ENCODE measurements at regions of chr2 and their contacts with region 1.

Region 1: GRCh38 chr2:170005484-170006101 is 172.4 kb upstream of the MYO3B start:
- DNase-seq: no peak
- H3K4me3 ChIP-seq: no peak overlapping the region
- H3K27ac ChIP-seq: no peak overlapping the region
- H3K4me1 ChIP-seq: no peaks in the 10 kb centered on the region
- H3K27me3 ChIP-seq: no peaks in the 10 kb centered on the region
- CTCF ChIP-seq: no peak
- EP300 ChIP-seq: no peak
- POLR2A ChIP-seq: no peak

Region 2: GRCh38 chr2:169961911-169962310 is 43.7 kb before region 1 on chr2:
- in situ Hi-C with region 1: no loop called
- intact Hi-C with region 1: loop called (anchors 1 kb)
- DNase-seq: no peak
- H3K4me3 ChIP-seq: no peak overlapping the region
- H3K27ac ChIP-seq: no peak overlapping the region
- H3K4me1 ChIP-seq: peaks cover 0 to 8% (median 4%) of the 10 kb centered on the region in 4 donors
- H3K27me3 ChIP-seq: no peaks in the 10 kb centered on the region
- CTCF ChIP-seq: no peak
- EP300 ChIP-seq: no peak
- POLR2A ChIP-seq: no peak

Region 3: DNA sequence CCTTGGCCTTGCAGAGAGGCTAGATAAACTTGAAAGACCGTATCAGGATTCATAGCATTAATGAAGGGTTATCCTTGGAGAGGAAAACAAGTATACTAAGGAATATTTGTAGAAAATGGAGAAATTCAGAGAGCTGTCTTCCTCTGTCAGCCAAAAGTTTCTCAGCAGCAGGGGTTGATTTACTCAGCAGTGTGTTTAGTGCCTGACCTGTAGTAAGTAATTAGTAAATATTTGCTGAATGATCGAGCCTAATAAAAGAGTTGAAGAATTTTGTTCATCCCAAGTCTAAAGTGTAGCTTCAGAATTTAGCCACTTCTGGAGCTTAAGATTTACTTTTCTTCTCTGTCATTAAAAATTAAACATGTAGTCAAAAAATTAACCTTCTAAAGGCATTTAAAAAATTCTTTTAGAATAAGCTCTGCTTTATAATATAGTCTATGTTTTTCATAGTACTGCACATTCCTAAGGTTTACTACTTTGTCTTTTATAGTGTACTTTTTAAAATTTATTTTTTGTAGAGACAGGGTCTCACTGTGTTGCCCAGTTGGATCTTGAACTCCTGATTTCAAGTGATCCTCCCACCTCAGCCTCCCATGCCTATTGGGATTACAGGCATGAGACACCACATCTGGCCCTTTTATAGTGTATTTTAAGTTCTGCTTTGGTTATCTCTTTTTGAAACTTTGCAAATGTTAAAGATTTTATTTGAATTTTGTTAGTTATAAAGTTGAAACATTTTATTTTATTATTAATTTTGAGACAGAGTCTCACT is 34.0 kb after region 1 on chr2:
- in situ Hi-C with region 1: no loop called
- intact Hi-C with region 1: loop called (anchors 1 kb)
- DNase-seq: no peak
- H3K4me3 ChIP-seq: no peak overlapping the region
- H3K27ac ChIP-seq: no peak overlapping the region
- H3K4me1 ChIP-seq: no peaks in the 10 kb centered on the region
- H3K27me3 ChIP-seq: no peaks in the 10 kb centered on the region
- CTCF ChIP-seq: no peak
- EP300 ChIP-seq: no peak
- POLR2A ChIP-seq: no peak

Region 4: GRCh38 chr2:170339750-170340692 is 334.4 kb after region 1 on chr2:
- in situ Hi-C with region 1: no loop called
- intact Hi-C with region 1: no loop called
- DNase-seq: no peak
- H3K4me3 ChIP-seq: no peak overlapping the region
- H3K27ac ChIP-seq: no peak overlapping the region
- H3K4me1 ChIP-seq: no peaks in the 10 kb centered on the region
- H3K27me3 ChIP-seq: no peaks in the 10 kb centered on the region
- CTCF ChIP-seq: no peak
- EP300 ChIP-seq: no peak
- POLR2A ChIP-seq: no peak

Region 5: DNA sequence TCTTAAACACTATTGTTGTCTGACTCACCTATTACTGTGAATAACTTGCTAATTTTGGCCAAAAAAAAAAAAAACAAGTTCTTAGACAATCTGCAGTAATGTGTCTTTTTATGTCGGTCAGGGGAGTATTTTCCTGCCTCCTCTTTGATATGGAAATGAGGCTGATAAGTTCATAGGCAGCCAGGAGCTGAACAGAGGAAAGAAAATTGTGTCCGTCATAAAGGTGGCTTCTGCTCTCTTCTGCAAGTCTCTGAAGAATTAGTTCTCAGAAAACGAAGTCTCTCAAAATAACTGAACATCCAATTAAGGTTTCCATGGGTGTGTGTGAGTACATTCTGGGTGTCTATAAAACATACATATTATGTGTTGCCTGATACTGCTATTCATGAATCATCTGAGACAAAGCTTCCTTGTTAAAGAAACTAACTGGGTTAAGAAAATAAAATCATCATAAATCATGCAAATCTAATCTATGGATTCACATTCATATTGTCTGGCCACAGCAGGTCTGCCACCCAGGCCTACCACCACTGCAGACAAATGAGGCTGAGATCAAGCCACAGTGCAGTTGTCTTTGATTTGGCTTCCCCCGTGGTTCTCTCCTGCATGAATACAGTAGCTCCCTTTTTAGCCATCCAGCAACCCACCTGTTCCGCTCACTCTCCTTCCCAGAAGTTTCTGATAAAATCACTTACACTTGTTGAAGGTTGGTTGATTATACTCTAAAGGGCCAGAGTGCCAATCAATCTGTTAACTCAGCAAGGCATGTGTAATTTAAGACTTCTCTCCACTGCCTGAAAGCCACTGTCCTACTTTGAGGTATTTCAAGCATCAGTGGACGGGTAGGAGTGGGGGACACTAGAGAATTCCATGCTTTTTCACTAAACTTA is 690.2 kb after region 1 on chr2:
- in situ Hi-C with region 1: no loop called
- intact Hi-C with region 1: no loop called
- DNase-seq: no peak
- H3K4me3 ChIP-seq: no peak overlapping the region
- H3K27ac ChIP-seq: no peak overlapping the region
- H3K4me1 ChIP-seq: no peaks in the 10 kb centered on the region
- H3K27me3 ChIP-seq: no peaks in the 10 kb centered on the region
- CTCF ChIP-seq: no peak
- EP300 ChIP-seq: no peak
- POLR2A ChIP-seq: no peak

Measured in transverse colon (tissue), 4 donors.